Activated CD4-positive, alpha-beta T cell treated with anti-CD3 and anti-CD28 coated beads for 36 hours (primary cell): ENCODE measurements at regions of chr7 and their contacts with region 1.

Region 1: DNA sequence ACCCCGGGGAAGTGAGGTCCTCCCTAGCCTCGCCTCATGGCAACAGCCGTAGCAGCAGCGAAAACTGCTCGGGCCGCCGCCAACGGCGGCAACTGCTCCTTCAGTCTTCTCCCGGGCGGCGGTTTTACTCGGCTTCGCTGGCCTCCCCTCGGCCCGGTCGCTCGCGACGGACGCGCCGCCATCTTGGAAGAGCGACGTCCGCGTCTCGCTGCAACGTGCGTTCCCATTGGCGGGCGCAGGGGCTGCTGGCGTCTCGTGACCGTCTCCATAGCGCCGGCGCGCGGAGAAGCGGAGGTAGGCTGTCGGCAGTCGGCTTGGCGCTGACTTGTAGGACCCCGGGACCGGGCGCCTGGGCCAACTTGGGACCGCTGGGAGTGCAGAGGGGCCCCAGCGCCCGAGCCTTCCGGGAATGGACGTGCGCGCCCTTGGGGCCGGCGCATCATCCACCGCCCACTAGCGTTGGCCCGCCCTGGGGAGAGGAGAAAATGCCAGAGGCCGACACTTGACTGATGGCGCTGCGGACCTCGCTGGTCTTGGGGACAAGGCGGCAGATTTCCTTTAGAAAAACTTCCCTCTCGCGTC is at the start of gene SNX13:
- DNase-seq: peak; percentile 95
- ATAC-seq: peak; percentile 92
- H3K4me3 Mint-ChIP-seq: peak within 1 kb of the TSS; percentile 89
- H3K27ac Mint-ChIP-seq: peak within 1 kb of the TSS; percentile 91
- H3K4me1 Mint-ChIP-seq: peaks cover 46% of the 10 kb centered on the region
- H3K27me3 Mint-ChIP-seq: no peaks in the 10 kb centered on the region
- total RNA-seq, gene SNX13: 23.9 to 25.5 TPM

Region 2: GRCh38 chr7:16645593-16646471 is 1294.6 kb before region 1 on chr7 and contains the starts of genes ANKMY2 and BZW2:
- CTCF ChIA-PET with region 1: no interaction called
- POLR2A ChIA-PET with region 1: no interaction called
- intact Hi-C with region 1: loop called in 1 of 2 experiments (anchors 5 kb)
- DNase-seq: peak; percentile 95
- ATAC-seq: peak; percentile 90
- H3K4me3 Mint-ChIP-seq: peak within 1 kb of the TSS; percentile 98
- H3K27ac Mint-ChIP-seq: peak within 1 kb of the TSS; percentile 99
- H3K4me1 Mint-ChIP-seq: peaks cover 48% of the 10 kb centered on the region
- H3K27me3 Mint-ChIP-seq: no peaks in the 10 kb centered on the region
- total RNA-seq, gene ANKMY2: 9.0 to 10.1 TPM
- total RNA-seq, gene BZW2: 106 to 113 TPM

Region 3: DNA sequence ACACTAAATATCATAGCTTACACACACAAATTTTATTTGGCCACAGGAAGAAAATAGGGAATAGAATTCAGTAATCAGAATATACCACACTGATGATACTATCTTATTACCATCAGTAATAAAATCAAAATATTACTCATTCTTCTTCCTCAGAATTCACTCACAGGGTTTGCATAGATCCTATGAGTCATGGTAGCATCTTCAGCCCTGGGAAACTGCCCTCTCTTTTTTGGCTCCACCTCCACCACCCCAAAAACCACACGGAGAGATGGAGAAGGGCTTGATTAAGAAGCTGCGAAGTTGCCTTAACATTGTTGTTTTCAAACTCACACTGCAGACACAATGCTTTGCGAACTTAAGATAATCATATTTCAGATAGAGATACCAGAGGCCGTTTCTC is 796.1 kb before region 1 on chr7:
- CTCF ChIA-PET with region 1: no interaction called
- POLR2A ChIA-PET with region 1: no interaction called
- intact Hi-C with region 1: loop called in 1 of 2 experiments (anchors 10 kb)
- DNase-seq: peak; percentile 79
- ATAC-seq: peak; percentile 88
- H3K4me3 Mint-ChIP-seq: peak overlapping the region; percentile 53
- H3K27ac Mint-ChIP-seq: peak overlapping the region; percentile 83
- H3K4me1 Mint-ChIP-seq: peaks cover 51% of the 10 kb centered on the region
- H3K27me3 Mint-ChIP-seq: peaks cover 2% of the 10 kb centered on the region

Region 4: GRCh38 chr7:17159500-17160037 is 780.8 kb before region 1 on chr7:
- CTCF ChIA-PET with region 1: no interaction called
- POLR2A ChIA-PET with region 1: no interaction called
- intact Hi-C with region 1: loop called in 1 of 2 experiments (anchors 10 kb)
- DNase-seq: peak; percentile 24
- ATAC-seq: peak; percentile 90
- H3K4me3 Mint-ChIP-seq: peak overlapping the region; percentile 0
- H3K27ac Mint-ChIP-seq: peak overlapping the region; percentile 55
- H3K4me1 Mint-ChIP-seq: peaks cover 40% of the 10 kb centered on the region
- H3K27me3 Mint-ChIP-seq: peaks cover 4% of the 10 kb centered on the region

Region 5: GRCh38 chr7:17871815-17872533 is 68.4 kb before region 1 on chr7:
- CTCF ChIA-PET with region 1: no interaction called
- POLR2A ChIA-PET with region 1: no interaction called
- intact Hi-C with region 1: loop called in 1 of 2 experiments (anchors 5 kb)
- DNase-seq: no peak
- ATAC-seq: peak; percentile 58
- H3K4me3 Mint-ChIP-seq: no peak overlapping the region
- H3K27ac Mint-ChIP-seq: no peak overlapping the region
- H3K4me1 Mint-ChIP-seq: peaks cover 15% of the 10 kb centered on the region
- H3K27me3 Mint-ChIP-seq: no peaks in the 10 kb centered on the region

Region 6: GRCh38 chr7:17952387-17952786 is 12.0 kb after region 1 on chr7:
- CTCF ChIA-PET with region 1: no interaction called
- POLR2A ChIA-PET with region 1: no interaction called
- intact Hi-C with region 1: loop called in 1 of 2 experiments (anchors 1 kb)
- DNase-seq: peak; percentile 61
- ATAC-seq: peak; percentile 95
- H3K4me3 Mint-ChIP-seq: no peak overlapping the region
- H3K27ac Mint-ChIP-seq: no peak overlapping the region
- H3K4me1 Mint-ChIP-seq: peaks cover 21% of the 10 kb centered on the region
- H3K27me3 Mint-ChIP-seq: peaks cover 4% of the 10 kb centered on the region

Region 7: GRCh38 chr7:17966711-17967110 is 26.3 kb after region 1 on chr7:
- CTCF ChIA-PET with region 1: no interaction called
- POLR2A ChIA-PET with region 1: no interaction called
- intact Hi-C with region 1: no loop called
- DNase-seq: no peak
- ATAC-seq: no peak
- H3K4me3 Mint-ChIP-seq: no peak overlapping the region
- H3K27ac Mint-ChIP-seq: no peak overlapping the region
- H3K4me1 Mint-ChIP-seq: no peaks in the 10 kb centered on the region
- H3K27me3 Mint-ChIP-seq: peaks cover 9% of the 10 kb centered on the region

Region 8: GRCh38 chr7:19708397-19709248 is 1768.2 kb after region 1 on chr7 and contains the start of gene POLR1F:
- CTCF ChIA-PET with region 1: no interaction called
- POLR2A ChIA-PET with region 1: no interaction called
- intact Hi-C with region 1: loop called in 1 of 2 experiments (anchors 5 kb)
- DNase-seq: peak; percentile 96
- ATAC-seq: peak; percentile 96
- H3K4me3 Mint-ChIP-seq: peak within 1 kb of the TSS; percentile 89
- H3K27ac Mint-ChIP-seq: peak within 1 kb of the TSS; percentile 90
- H3K4me1 Mint-ChIP-seq: peaks cover 41% of the 10 kb centered on the region
- H3K27me3 Mint-ChIP-seq: no peaks in the 10 kb centered on the region
- total RNA-seq, gene POLR1F: 25.8 to 32.2 TPM